Posterior vena cava (tissue), 2 donors: ENCODE measurements at regions of chr2 and their contacts with region 1.

Region 1: DNA sequence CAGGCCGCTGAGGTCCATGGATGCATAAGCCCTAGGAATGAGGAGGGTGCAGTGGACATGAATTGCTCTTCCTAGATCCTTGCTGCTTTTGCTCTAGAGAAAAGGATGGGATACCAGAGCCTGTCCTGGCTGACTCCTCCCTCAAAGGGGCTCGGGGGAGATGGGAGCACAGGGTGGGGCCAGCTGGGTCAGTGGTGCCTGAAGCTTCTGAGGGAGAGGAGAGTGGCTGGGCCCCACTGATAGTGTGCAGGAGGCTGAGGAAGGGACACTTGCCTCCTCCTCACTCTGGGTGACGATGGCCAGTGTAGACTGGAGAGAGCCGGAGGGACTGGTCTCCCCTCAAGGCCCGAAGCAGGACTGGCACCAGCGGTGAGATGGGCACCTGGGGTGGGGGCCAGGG is at the start of gene NT5DC4:
- DNase-seq: no peak
- total RNA-seq, gene NT5DC4: not detected

Region 2: GRCh38 chr2:112692496-112692911 is 28.3 kb before region 1 on chr2:
- intact Hi-C with region 1: loop called in 1 of 2 experiments (anchors 2 kb)
- DNase-seq: peak; percentile 83

Region 3: GRCh38 chr2:112811841-112812306 is 91.1 kb after region 1 on chr2:
- intact Hi-C with region 1: no loop called
- DNase-seq: no peak

Region 4: GRCh38 chr2:113138428-113139322 is 417.9 kb after region 1 on chr2:
- intact Hi-C with region 1: no loop called
- DNase-seq: no peak